Head of caudate nucleus (tissue), 42 donors: ENCODE measurements at regions of chr2 and their contacts with region 1.

Region 1: DNA sequence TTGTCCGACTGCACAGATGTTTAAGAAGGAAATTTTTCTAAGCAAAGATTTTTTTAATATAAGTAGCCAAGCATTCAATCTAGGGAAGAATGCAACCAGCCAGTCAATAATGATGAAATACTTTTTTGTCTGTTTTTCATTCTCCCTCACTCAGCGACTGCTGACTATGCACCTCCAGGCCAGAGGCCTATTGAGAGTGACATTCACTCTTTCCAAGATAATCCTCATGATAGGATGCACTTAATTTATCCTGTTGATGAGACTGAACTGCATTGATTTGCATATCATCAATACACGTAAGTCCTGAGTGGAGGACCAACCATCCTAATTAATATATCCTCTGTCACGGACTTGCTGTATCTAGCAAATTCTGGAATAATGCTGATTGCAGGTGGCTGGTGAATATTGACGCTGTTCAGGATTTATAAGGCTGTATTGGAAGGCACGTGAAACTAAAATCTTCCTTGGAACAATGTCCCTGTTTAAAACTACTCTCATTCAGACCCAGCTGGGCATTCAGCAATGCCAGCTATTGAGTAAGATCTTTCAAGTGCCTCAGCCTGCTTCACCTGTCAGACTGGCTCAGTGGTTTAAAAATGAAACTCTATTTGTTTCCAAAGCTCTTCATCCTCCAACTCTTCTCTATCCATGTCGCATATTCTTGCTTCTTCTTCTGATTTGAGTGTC is 142.2 kb downstream of the MAP2 start:
- DNase-seq: no peak

Region 2: GRCh38 chr2:208671284-208671683 is 894.8 kb before region 1 on chr2:
- intact Hi-C with region 1: no loop called
- DNase-seq: no peak

Region 3: GRCh38 chr2:209423562-209424198 is 142.4 kb before region 1 on chr2 and contains the start of gene MAP2:
- intact Hi-C with region 1: loop called (anchors 10 kb)
- DNase-seq: peak; percentile 48 to 96 (median 90)